ENCODE measurements at regions of chr6 and their contacts with region 1.

Region 1: GRCh38 chr6:83615025-83615999 is 93.6 kb downstream of the SNAP91 start:
- DNase-seq: peak in 3 of 14 experiments; percentile 11 to 22 (median 19)
- ATAC-seq: no peak
- H3K4me3 ChIP-seq: no peak overlapping the region
- H3K4me3 Mint-ChIP-seq: no peak overlapping the region
- H3K27ac ChIP-seq: no peak overlapping the region
- H3K27ac Mint-ChIP-seq: no peak overlapping the region
- H3K4me1 ChIP-seq: no peaks in the 10 kb centered on the region
- H3K4me1 Mint-ChIP-seq: no peaks in the 10 kb centered on the region
- H3K27me3 ChIP-seq: no peaks in the 10 kb centered on the region
- H3K27me3 Mint-ChIP-seq: no peaks in the 10 kb centered on the region
- CTCF ChIP-seq: no peak

Region 2: GRCh38 chr6:85323435-85324040 is 1708.2 kb after region 1 on chr6:
- CTCF ChIA-PET with region 1: interaction called, 4 read pairs
- POLR2A ChIA-PET with region 1: no interaction called
- intact Hi-C with region 1: loop called (anchors 2 to 5 kb)
- DNase-seq: peak; percentile 31 to 70 (median 48)
- ATAC-seq: peak; percentile 57
- H3K4me3 ChIP-seq: no peak overlapping the region
- H3K4me3 Mint-ChIP-seq: no peak overlapping the region
- H3K27ac ChIP-seq: no peak overlapping the region
- H3K27ac Mint-ChIP-seq: no peak overlapping the region
- H3K4me1 ChIP-seq: no peaks in the 10 kb centered on the region
- H3K4me1 Mint-ChIP-seq: no peaks in the 10 kb centered on the region
- H3K27me3 ChIP-seq: peaks cover 0 to 2% of the 10 kb centered on the region in 2 experiments
- H3K27me3 Mint-ChIP-seq: peaks cover 9% of the 10 kb centered on the region
- CTCF ChIP-seq: peak; percentile 69

Measured in CD4-positive, alpha-beta T cell (primary cell).